ENCODE measurements at regions of chr7 and their contacts with region 1.

Region 1: GRCh38 chr7:48088559-48089045 is 463 bp upstream of the UPP1 start:
- H3K4me3 Mint-ChIP-seq: peak overlapping the region; percentile 91
- H3K27ac Mint-ChIP-seq: peak overlapping the region; percentile 98
- H3K4me1 Mint-ChIP-seq: peaks cover 83% of the 10 kb centered on the region
- H3K27me3 Mint-ChIP-seq: no peaks in the 10 kb centered on the region

Region 2: GRCh38 chr7:47066971-47067614 is 1021.5 kb before region 1 on chr7:
- intact Hi-C with region 1: no loop called
- H3K4me3 Mint-ChIP-seq: no peak overlapping the region
- H3K27ac Mint-ChIP-seq: no peak overlapping the region
- H3K4me1 Mint-ChIP-seq: no peaks in the 10 kb centered on the region
- H3K27me3 Mint-ChIP-seq: peaks cover 2% of the 10 kb centered on the region

Region 3: GRCh38 chr7:47979145-47979831 is 109.3 kb before region 1 on chr7 and contains the start of gene HUS1:
- intact Hi-C with region 1: loop called (anchors 2 kb)
- H3K4me3 Mint-ChIP-seq: peak within 1 kb of the TSS; percentile 83
- H3K27ac Mint-ChIP-seq: peak within 1 kb of the TSS; percentile 95
- H3K4me1 Mint-ChIP-seq: peaks cover 19% of the 10 kb centered on the region
- H3K27me3 Mint-ChIP-seq: no peaks in the 10 kb centered on the region

Region 4: GRCh38 chr7:47991741-47992311 is 96.8 kb before region 1 on chr7:
- intact Hi-C with region 1: loop called (anchors 5 kb)
- H3K4me3 Mint-ChIP-seq: peak overlapping the region; percentile 89
- H3K27ac Mint-ChIP-seq: peak overlapping the region; percentile 85
- H3K4me1 Mint-ChIP-seq: peaks cover 27% of the 10 kb centered on the region
- H3K27me3 Mint-ChIP-seq: no peaks in the 10 kb centered on the region

Region 5: DNA sequence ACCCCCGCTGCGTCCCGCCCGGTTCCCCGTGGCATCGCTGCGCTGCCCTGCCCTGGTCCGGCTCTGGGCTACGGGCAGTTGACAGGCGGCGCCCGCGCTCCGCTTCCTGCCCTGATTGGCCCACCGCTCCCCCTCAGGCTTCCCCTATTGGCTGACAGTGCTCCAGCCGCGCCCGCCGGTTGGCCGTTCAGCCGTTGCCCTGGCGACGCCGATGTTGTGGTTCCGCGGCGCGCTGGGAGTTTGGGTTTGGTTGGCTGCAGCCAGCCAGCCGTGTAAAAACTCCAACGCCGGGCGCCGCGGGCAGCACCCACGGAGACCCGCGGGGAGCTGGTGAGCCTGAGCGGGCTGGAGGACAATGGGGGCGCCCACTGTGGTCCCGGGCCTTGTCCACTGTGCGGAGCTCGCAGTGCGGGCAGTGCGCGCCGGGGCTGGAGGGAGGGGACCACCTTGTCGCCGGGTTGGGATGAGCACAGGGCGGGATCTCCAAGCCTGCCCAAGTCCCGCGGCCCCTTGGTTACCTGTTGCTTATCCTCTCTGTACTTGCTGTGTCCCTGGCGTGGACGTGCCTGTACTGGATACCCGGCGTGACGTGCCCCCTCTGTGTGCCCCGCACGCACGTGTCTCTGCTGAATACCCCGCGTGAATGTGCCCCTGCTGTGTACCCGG is 53.2 kb before region 1 on chr7 and contains the start of gene C7orf57:
- intact Hi-C with region 1: loop called (anchors 1 kb)
- H3K4me3 Mint-ChIP-seq: peak within 1 kb of the TSS; percentile 74
- H3K27ac Mint-ChIP-seq: peak within 1 kb of the TSS; percentile 83
- H3K4me1 Mint-ChIP-seq: peaks cover 16% of the 10 kb centered on the region
- H3K27me3 Mint-ChIP-seq: peaks cover 52% of the 10 kb centered on the region

Region 6: DNA sequence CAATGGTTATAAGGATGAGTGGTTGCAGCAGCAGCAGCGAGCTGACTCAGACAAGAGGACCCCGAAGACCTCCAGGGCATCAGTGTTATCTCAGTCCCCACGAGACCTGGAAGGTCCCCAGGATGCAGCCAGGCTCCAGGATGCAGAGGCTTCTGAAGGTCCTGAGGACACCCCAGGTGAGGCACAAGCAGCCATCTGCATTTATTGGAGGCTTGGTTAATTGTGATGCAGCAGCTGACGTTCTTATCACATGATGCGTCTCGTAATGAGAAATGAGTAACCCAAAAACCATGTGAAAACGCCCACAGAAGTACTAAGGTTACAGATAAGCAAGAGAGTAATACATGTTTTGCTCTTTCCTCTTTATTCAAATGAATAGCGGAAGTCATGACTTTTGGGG is 35.9 kb before region 1 on chr7:
- intact Hi-C with region 1: loop called (anchors 5 kb)
- H3K4me3 Mint-ChIP-seq: no peak overlapping the region
- H3K27ac Mint-ChIP-seq: no peak overlapping the region
- H3K4me1 Mint-ChIP-seq: peaks cover 28% of the 10 kb centered on the region
- H3K27me3 Mint-ChIP-seq: no peaks in the 10 kb centered on the region

Measured in dendritic cell treated with granulocyte-macrophage colony-stimulating factor and Interleukin-4, amounts not matched to agents 40 ng/mL and 50 ng/mL, for 4 days (primary cell).